ENCODE measurements at regions of chr1 and their contacts with region 1.

Region 1: GRCh38 chr1:27522432-27523351 is 32.7 kb upstream of the WASF2 start:
- DNase-seq: peak; percentile 91
- H3K4me3 Mint-ChIP-seq: peak overlapping the region; percentile 84
- H3K27ac Mint-ChIP-seq: peak overlapping the region; percentile 96
- H3K4me1 Mint-ChIP-seq: peaks cover 66% of the 10 kb centered on the region
- H3K27me3 Mint-ChIP-seq: no peaks in the 10 kb centered on the region

Region 2: GRCh38 chr1:27321813-27322577 is 200.7 kb before region 1 on chr1 and contains the start of gene TMEM222:
- intact Hi-C with region 1: no loop called
- DNase-seq: peak; percentile 99
- H3K4me3 Mint-ChIP-seq: peak within 1 kb of the TSS; percentile 97
- H3K27ac Mint-ChIP-seq: peak within 1 kb of the TSS; percentile 93
- H3K4me1 Mint-ChIP-seq: peaks cover 29% of the 10 kb centered on the region
- H3K27me3 Mint-ChIP-seq: peaks cover 5% of the 10 kb centered on the region
- total RNA-seq, gene TMEM222: 39.6 and 41.4 TPM in 2 replicates

Region 3: GRCh38 chr1:27416387-27417111 is 106.1 kb before region 1 on chr1:
- intact Hi-C with region 1: loop called (anchors 2 kb)
- DNase-seq: peak; percentile 87
- H3K4me3 Mint-ChIP-seq: no peak overlapping the region
- H3K27ac Mint-ChIP-seq: peak overlapping the region; percentile 14
- H3K4me1 Mint-ChIP-seq: peaks cover 28% of the 10 kb centered on the region
- H3K27me3 Mint-ChIP-seq: no peaks in the 10 kb centered on the region

Region 4: GRCh38 chr1:27489910-27490741 is 32.6 kb before region 1 on chr1 and contains the start of gene WASF2:
- intact Hi-C with region 1: loop called (anchors 1 kb)
- DNase-seq: peak; percentile 99
- H3K4me3 Mint-ChIP-seq: peak within 1 kb of the TSS; percentile 89
- H3K27ac Mint-ChIP-seq: peak within 1 kb of the TSS; percentile 99
- H3K4me1 Mint-ChIP-seq: peaks cover 25% of the 10 kb centered on the region
- H3K27me3 Mint-ChIP-seq: no peaks in the 10 kb centered on the region
- total RNA-seq, gene WASF2: 109 TPM in 2 replicates

Region 5: GRCh38 chr1:27504588-27505419 is 17.9 kb before region 1 on chr1:
- intact Hi-C with region 1: no loop called
- DNase-seq: no peak
- H3K4me3 Mint-ChIP-seq: no peak overlapping the region
- H3K27ac Mint-ChIP-seq: no peak overlapping the region
- H3K4me1 Mint-ChIP-seq: peaks cover 7% of the 10 kb centered on the region
- H3K27me3 Mint-ChIP-seq: peaks cover 2% of the 10 kb centered on the region

Region 6: DNA sequence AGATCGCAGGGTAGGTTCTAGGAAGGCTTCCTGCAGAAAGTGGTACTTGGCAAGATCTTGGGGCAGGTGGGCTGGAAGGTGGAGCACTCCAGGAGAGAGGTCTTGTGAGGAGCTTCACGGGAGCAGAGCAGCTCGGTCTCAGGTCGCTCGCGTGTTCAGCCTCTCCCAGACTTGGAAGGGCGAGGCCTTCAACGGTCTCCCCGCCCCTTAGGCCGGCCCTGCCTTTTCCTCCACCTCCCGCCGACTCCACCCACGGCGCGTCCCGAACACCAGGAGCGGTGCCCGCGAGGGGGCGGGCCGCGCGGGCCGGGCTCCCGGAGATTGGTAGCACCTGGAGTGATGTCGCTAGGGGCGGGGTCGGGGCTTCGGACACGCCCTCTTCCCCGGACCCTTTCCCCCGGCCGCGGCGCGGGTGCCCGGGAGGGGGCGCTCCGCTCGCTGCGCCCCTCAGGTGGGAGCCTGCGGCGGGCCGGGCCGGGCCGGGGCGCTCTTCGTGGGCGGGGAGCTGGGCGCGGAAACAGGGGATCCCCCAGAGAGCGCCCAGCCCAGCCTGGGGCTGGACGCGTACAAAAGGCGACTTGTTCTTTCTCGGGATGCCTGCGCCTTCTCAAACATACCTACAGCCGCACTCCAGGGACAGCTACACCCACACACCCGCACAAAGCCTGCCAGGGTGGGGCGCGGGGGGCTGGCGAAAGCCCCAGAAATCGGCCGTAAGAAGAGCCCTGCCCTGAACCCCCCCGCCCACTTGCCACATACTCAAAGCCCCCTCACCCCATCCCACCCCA is 45.8 kb after region 1 on chr1:
- intact Hi-C with region 1: loop called (anchors 2 kb)
- DNase-seq: peak; percentile 99
- H3K4me3 Mint-ChIP-seq: peak overlapping the region; percentile 76
- H3K27ac Mint-ChIP-seq: peak overlapping the region; percentile 43
- H3K4me1 Mint-ChIP-seq: peaks cover 25% of the 10 kb centered on the region
- H3K27me3 Mint-ChIP-seq: no peaks in the 10 kb centered on the region

Region 7: GRCh38 chr1:27588256-27589232 is 65.9 kb after region 1 on chr1:
- intact Hi-C with region 1: no loop called
- DNase-seq: no peak
- H3K4me3 Mint-ChIP-seq: no peak overlapping the region
- H3K27ac Mint-ChIP-seq: no peak overlapping the region
- H3K4me1 Mint-ChIP-seq: peaks cover 5% of the 10 kb centered on the region
- H3K27me3 Mint-ChIP-seq: no peaks in the 10 kb centered on the region

Region 8: DNA sequence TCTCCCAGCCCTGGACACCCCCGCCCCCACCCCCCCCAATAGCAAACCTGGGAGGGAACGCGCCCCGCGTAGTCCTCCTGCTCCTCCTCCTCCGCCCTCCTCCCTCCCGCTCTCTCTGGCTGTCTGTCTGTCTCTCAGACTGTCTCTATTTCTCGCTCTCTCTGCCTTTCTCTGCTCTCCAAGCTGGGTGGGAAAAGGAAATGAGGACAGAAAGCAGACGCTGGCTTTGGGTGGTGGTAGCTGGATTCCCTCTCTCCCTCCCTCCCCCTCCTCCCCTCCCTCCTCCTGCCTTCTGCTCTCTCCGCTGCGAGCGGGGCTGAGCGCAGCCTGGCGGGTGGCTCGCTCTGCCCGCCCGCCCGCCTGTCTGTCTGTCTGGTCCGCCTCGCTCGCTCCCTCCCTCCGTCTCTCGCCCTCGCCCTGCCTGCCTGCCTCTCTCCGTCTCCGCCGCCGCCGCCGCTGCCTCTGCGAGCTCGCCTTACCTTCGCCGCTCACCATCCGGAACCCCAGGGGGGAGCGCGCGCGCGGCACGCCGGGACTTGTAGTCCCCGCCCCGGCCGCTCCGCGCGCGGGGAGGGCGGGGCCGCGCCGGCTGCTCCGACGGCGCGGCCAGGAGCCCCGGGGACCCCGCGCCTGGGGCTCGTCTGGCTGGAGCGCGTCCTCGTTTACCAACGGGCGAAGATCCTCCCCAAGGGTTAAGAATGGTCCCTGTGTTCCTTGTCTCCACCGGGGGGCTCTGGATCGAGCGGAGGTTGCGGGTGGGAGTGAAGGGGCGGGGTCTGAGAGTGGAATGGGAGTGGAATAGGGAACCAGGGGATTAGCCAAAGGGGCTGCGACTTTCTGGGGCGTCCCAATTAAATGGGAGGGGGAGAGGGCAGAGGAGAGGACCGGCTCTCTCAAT is 81.2 kb after region 1 on chr1 and contains the start of gene AHDC1:
- intact Hi-C with region 1: loop called (anchors 2 kb)
- DNase-seq: peak; percentile 98
- H3K4me3 Mint-ChIP-seq: peak within 1 kb of the TSS; percentile 99
- H3K27ac Mint-ChIP-seq: peak within 1 kb of the TSS; percentile 92
- H3K4me1 Mint-ChIP-seq: peaks cover 43% of the 10 kb centered on the region
- H3K27me3 Mint-ChIP-seq: no peaks in the 10 kb centered on the region
- total RNA-seq, gene AHDC1: 33.9 and 34.7 TPM in 2 replicates

Region 9: GRCh38 chr1:28147264-28148094 is 624.8 kb after region 1 on chr1:
- intact Hi-C with region 1: no loop called
- DNase-seq: no peak
- H3K4me3 Mint-ChIP-seq: no peak overlapping the region
- H3K27ac Mint-ChIP-seq: no peak overlapping the region
- H3K4me1 Mint-ChIP-seq: peaks cover 9% of the 10 kb centered on the region
- H3K27me3 Mint-ChIP-seq: peaks cover 54% of the 10 kb centered on the region